Transverse colon (tissue), 4 donors: ENCODE measurements at regions of chr17 and their contacts with region 1.

Region 1: GRCh38 chr17:41367426-41368075 is 2.1 kb downstream of the KRT33B start:
- DNase-seq: no peak
- H3K4me3 ChIP-seq: no peak overlapping the region
- H3K27ac ChIP-seq: no peak overlapping the region
- H3K4me1 ChIP-seq: no peaks in the 10 kb centered on the region
- H3K27me3 ChIP-seq: no peaks in the 10 kb centered on the region
- CTCF ChIP-seq: no peak
- EP300 ChIP-seq: no peak
- POLR2A ChIP-seq: no peak

Region 2: DNA sequence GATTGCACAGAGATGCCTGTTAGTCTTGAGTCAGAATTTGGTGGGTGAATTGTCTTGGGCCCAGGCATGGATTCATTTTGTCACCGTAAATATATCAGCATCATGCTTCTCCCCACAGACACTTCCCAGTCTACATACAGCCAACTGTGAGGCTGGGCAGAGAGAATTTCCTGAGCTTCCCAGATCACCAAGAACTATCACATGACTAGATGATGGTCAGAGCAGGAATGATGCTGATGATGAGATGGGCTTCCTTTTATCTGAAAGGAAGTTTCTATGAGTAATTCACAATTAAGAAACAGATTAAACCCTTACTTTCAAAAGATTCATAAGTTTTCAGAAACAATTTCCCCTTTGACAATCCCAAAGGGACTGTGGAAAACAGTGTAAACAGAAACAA is 112.7 kb before region 1 on chr17:
- in situ Hi-C with region 1: loop called in 1 of 4 experiments (anchors 25 kb)
- intact Hi-C with region 1: no loop called
- DNase-seq: no peak
- H3K4me3 ChIP-seq: no peak overlapping the region
- H3K27ac ChIP-seq: no peak overlapping the region
- H3K4me1 ChIP-seq: no peaks in the 10 kb centered on the region
- H3K27me3 ChIP-seq: peaks cover 29% of the 10 kb centered on the region
- CTCF ChIP-seq: no peak
- EP300 ChIP-seq: no peak
- POLR2A ChIP-seq: no peak